Activated CD4-positive, alpha-beta T cell treated with anti-CD3 and anti-CD28 coated beads, Interleukin-2, amount 10 ng/mL, durations not matched to agents 7 days and 5 days (primary cell): ENCODE measurements at regions of chr3 and their contacts with region 1.

Region 1: GRCh38 chr3:185585859-185586685 is at the start of gene SENP2:
- DNase-seq: peak; percentile 99
- H3K4me3 Mint-ChIP-seq: peak within 1 kb of the TSS; percentile 84
- H3K27ac Mint-ChIP-seq: peak within 1 kb of the TSS; percentile 94
- H3K4me1 Mint-ChIP-seq: peaks cover 32% of the 10 kb centered on the region
- H3K27me3 Mint-ChIP-seq: peaks cover 2% of the 10 kb centered on the region
- total RNA-seq, gene SENP2: 29.7 to 31.2 TPM

Region 2: DNA sequence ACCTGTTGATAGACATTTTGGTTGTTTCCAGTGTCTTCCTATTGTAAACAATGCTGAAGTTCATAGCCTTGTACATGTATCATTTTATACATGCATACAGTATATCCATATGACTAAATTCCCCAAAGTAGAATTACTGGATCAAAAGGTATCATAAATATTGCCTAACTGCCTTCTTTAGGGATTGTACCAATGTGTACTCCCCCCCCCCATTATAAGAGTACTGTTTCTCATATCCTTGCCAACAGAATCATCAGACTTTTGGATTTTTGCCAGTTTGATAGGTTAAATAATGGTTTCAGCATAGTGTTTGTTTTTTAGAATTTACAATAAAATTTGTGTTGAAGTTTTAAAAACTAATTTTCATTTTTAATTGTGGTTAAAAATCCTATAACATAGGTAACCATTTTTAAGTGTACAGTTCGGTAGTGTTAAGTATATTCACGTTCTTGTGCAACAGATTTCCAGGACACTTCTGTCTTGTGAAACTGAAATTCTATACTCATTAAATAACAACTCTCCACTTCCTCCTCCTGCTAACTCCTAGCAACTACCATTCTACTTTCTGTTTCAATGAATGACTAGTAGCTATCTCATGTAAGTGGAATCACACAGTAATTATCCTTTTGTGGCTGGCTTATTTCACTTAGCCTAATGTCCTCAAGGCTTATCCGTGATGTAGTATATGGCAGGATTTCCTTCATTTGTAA is 253.9 kb before region 1 on chr3:
- CTCF ChIA-PET with region 1: no interaction called
- POLR2A ChIA-PET with region 1: no interaction called
- DNase-seq: no peak
- H3K4me3 Mint-ChIP-seq: no peak overlapping the region
- H3K27ac Mint-ChIP-seq: peak overlapping the region; percentile 60
- H3K4me1 Mint-ChIP-seq: peaks cover 18% of the 10 kb centered on the region
- H3K27me3 Mint-ChIP-seq: peaks cover 2% of the 10 kb centered on the region

Region 3: DNA sequence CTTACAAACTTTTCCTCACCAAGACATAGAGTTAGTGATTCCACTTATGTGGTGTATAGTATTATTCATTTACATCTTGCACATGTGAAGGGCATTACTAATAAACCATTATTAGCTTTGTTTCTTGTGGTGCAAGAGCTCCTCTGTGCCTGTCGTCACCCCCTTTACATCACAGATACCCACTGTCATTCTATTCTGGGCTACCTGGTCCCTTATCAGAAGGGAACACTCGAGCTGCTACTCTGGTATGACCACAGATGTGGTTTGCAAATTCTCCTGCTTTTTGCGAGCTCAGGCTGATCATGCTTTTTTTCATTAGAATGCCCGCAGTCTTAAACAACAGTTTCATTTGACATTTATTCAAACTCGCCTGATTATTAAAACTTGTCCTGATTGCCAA is 13.9 kb before region 1 on chr3:
- CTCF ChIA-PET with region 1: interaction called, 12 read pairs
- POLR2A ChIA-PET with region 1: no interaction called
- DNase-seq: no peak
- H3K4me3 Mint-ChIP-seq: no peak overlapping the region
- H3K27ac Mint-ChIP-seq: no peak overlapping the region
- H3K4me1 Mint-ChIP-seq: peaks cover 6% of the 10 kb centered on the region
- H3K27me3 Mint-ChIP-seq: no peaks in the 10 kb centered on the region

Region 4: DNA sequence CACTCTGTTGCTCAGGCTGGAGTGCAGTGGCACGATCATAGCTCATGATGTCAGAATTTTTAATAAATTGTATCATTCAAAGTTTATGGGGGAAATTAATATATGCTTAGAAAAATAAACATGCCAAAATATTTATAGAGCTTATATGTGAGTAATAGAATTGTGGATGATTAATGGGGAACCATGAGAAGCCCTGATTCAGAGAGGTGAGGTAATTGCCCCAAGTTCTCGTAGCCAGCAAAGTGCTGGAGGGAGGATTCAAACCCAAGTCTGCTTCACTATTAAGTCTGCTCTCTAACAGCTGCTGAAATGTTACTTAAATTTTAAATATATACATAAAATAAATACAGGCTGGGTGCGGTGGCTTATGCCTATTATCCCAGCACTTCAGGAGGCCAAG is 265.0 kb after region 1 on chr3:
- CTCF ChIA-PET with region 1: no interaction called
- POLR2A ChIA-PET with region 1: no interaction called
- DNase-seq: no peak
- H3K4me3 Mint-ChIP-seq: no peak overlapping the region
- H3K27ac Mint-ChIP-seq: no peak overlapping the region
- H3K4me1 Mint-ChIP-seq: no peaks in the 10 kb centered on the region
- H3K27me3 Mint-ChIP-seq: no peaks in the 10 kb centered on the region

Region 5: DNA sequence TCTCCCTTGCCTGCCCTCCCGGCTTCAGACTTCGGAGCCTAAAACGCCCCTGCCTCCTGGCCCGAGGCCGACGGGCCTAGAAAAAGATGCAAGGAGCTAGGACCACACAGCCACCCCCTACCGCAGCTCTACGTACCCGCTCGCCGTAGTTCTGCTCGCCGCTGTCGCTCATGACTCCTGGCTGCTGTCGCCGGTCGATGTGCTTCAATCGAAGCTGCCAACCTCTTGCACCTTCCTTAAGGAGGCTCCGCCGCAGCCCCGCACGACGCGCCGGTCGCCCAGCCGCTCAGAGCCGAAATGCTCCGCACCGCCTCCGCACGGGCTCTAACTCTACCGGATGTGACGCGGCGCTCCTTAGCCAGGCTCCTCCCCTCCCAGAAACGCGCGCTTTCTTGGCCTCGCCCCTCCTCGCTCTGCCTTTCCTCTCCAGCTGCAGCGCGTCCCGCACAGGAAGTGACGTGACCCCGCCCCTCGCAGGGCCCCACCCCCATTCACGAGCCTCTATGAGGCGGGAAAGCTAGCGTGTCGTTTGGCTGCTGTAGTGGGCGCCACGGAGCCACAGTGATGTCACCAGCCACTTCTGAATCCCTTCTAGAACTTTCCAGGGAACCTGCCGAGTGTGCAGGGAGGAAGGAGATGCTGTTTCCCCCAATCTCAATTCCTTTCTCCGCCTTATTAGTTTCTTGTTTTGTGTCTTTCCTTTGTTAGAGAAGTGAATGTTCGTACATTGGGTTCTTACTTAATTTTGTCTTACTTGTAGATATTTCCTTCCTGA is 351.8 kb after region 1 on chr3 and contains the start of gene TRA2B:
- CTCF ChIA-PET with region 1: no interaction called
- POLR2A ChIA-PET with region 1: no interaction called
- DNase-seq: peak; percentile 98
- H3K4me3 Mint-ChIP-seq: peak within 1 kb of the TSS; percentile 100
- H3K27ac Mint-ChIP-seq: peak within 1 kb of the TSS; percentile 100
- H3K4me1 Mint-ChIP-seq: peaks cover 31% of the 10 kb centered on the region
- H3K27me3 Mint-ChIP-seq: peaks cover 4% of the 10 kb centered on the region
- total RNA-seq, gene TRA2B: 224 to 284 TPM